ENCODE measurements at regions of chr2 and their contacts with region 1.

Region 1: DNA sequence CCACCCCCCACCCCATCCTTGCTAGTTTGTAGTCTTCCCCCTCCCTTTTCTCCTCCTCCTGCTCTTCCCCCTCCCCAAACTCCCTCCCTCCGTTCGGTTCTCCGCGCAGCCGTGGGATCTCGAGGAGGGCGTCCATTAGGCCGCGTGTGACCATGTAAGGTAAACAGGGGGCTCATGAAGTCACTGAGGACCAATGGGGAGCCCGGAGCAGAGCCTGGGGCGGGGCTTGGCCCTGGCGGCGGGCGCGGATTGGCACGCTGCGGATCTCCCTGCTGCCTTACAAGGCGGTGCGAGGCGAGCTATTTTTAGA is 246 bp upstream of the KLF7 start:
- DNase-seq: peak; percentile 99
- H3K4me3 Mint-ChIP-seq: peak overlapping the region; percentile 90
- H3K27ac Mint-ChIP-seq: peak overlapping the region; percentile 99
- H3K4me1 Mint-ChIP-seq: peaks cover 44% of the 10 kb centered on the region
- H3K27me3 Mint-ChIP-seq: no peaks in the 10 kb centered on the region
- CTCF ChIP-seq: no peak

Region 2: GRCh38 chr2:206790311-206790935 is 375.6 kb before region 1 on chr2:
- CTCF ChIA-PET with region 1: no interaction called
- POLR2A ChIA-PET with region 1: no interaction called
- intact Hi-C with region 1: no loop called
- DNase-seq: no peak
- H3K4me3 Mint-ChIP-seq: no peak overlapping the region
- H3K27ac Mint-ChIP-seq: peak overlapping the region; percentile 3
- H3K4me1 Mint-ChIP-seq: no peaks in the 10 kb centered on the region
- H3K27me3 Mint-ChIP-seq: no peaks in the 10 kb centered on the region
- CTCF ChIP-seq: no peak

Region 3: DNA sequence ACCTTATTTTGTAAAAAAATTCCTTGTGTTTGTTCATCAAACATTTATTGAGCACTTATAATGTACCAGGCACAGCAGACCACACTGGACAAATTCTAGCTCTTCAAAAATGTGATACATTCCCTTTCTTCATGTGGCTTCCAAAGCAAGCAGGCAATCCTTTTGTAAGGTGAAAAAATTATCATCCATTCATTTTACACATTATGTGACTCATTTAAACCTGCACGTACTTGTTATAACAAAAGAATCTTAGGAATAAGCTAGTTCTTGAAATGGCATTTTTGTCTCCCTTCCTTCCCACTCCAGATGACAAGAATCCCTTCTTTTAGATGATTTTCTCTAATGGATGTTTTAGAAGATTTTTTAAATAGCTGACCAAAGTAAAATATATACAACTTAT is 104.8 kb before region 1 on chr2:
- CTCF ChIA-PET with region 1: interaction called, 3 read pairs
- POLR2A ChIA-PET with region 1: interaction called, 12 read pairs
- intact Hi-C with region 1: no loop called
- DNase-seq: peak; percentile 28
- H3K4me3 Mint-ChIP-seq: no peak overlapping the region
- H3K27ac Mint-ChIP-seq: no peak overlapping the region
- H3K4me1 Mint-ChIP-seq: no peaks in the 10 kb centered on the region
- H3K27me3 Mint-ChIP-seq: no peaks in the 10 kb centered on the region
- CTCF ChIP-seq: no peak

Region 4: GRCh38 chr2:207143215-207144172 is 22.5 kb before region 1 on chr2:
- CTCF ChIA-PET with region 1: interaction called, 5 read pairs
- POLR2A ChIA-PET with region 1: interaction called, 143 read pairs
- intact Hi-C with region 1: no loop called
- DNase-seq: no peak
- H3K4me3 Mint-ChIP-seq: no peak overlapping the region
- H3K27ac Mint-ChIP-seq: peak overlapping the region; percentile 1
- H3K4me1 Mint-ChIP-seq: peaks cover 32% of the 10 kb centered on the region
- H3K27me3 Mint-ChIP-seq: no peaks in the 10 kb centered on the region
- CTCF ChIP-seq: no peak

Region 5: DNA sequence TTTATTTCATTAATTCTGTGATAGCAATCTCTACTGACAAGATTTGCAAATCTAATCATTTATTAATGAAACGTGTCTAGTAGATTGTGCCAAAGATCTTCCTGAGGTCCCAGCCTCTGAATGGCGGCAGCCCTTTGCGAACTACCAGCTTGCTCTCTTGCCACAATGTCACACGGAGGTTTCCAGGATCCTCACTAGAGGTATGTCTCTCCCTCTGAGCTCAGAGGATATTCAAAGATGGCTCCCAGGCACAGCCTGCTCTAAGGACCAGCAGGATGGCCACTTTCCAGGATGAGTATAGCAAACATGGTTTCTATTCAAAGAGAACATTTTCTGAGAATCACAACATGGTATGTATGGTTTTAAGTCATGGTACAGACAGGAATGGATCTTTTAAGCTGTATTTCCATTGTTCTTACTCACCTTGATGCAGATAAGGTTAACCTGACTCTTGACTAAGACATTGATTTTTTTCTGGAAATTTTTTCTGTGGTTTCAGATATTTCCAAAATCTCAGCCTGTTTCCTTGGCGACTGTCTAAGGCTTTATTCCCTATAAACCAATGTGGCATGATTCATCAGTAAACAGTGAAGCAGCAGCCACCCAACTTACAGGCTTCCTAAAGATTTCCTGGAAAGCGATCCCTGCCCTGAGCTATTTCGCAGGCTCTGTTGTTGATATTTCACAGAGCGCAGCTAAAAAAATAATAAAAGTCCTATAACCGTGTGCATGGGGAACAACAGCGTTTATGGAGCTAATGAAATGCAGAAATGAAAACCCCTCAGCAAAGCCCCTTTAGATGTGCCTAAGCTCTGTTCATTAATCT is 53.9 kb after region 1 on chr2:
- CTCF ChIA-PET with region 1: interaction called, 4 read pairs
- POLR2A ChIA-PET with region 1: interaction called, 10 read pairs
- intact Hi-C with region 1: no loop called
- DNase-seq: peak; percentile 68
- H3K4me3 Mint-ChIP-seq: no peak overlapping the region
- H3K27ac Mint-ChIP-seq: no peak overlapping the region
- H3K4me1 Mint-ChIP-seq: peaks cover 10% of the 10 kb centered on the region
- H3K27me3 Mint-ChIP-seq: no peaks in the 10 kb centered on the region
- CTCF ChIP-seq: no peak

Region 6: DNA sequence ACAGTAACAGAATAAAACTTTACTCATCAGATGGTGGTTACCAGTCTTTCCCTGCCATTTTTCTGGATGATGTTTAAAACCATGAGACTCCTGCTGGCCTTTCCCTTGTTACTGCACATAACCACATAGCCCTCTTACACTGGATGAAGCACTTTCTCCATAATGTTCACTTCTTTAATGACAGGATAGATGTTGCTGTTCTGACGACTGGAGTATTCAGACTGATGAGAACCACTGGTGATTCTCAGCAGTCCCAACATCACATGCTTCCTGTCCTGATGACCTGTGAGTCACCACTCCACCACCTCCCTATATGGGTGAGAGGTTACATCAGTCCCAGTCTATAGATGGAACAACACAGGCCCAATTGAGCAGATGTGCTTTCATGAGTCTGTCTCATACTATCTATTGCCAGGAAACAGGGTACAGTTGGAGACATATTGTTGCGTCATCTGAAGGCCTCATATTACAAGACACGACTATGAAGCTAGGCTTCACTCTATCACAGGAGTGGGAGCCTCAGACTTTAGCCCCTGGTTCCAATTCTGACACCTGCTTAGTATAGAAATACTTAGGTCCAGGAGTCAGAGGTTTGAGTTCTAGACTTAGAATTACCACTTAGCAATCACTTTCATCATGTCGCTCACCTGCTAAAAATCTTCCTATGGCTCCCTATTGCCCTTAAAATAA is 145.5 kb after region 1 on chr2:
- CTCF ChIA-PET with region 1: interaction called, 3 read pairs
- POLR2A ChIA-PET with region 1: interaction called, 3 read pairs
- intact Hi-C with region 1: loop called (anchors 1 kb)
- DNase-seq: peak; percentile 97
- H3K4me3 Mint-ChIP-seq: no peak overlapping the region
- H3K27ac Mint-ChIP-seq: peak overlapping the region; percentile 74
- H3K4me1 Mint-ChIP-seq: peaks cover 27% of the 10 kb centered on the region
- H3K27me3 Mint-ChIP-seq: no peaks in the 10 kb centered on the region
- CTCF ChIP-seq: peak; percentile 23

Region 7: GRCh38 chr2:207473049-207473930 is 307.3 kb after region 1 on chr2:
- CTCF ChIA-PET with region 1: interaction called, 21 read pairs
- POLR2A ChIA-PET with region 1: interaction called, 8 read pairs
- intact Hi-C with region 1: loop called (anchors 1 kb)
- DNase-seq: peak; percentile 77
- H3K4me3 Mint-ChIP-seq: no peak overlapping the region
- H3K27ac Mint-ChIP-seq: peak overlapping the region; percentile 39
- H3K4me1 Mint-ChIP-seq: peaks cover 8% of the 10 kb centered on the region
- H3K27me3 Mint-ChIP-seq: no peaks in the 10 kb centered on the region
- CTCF ChIP-seq: peak; percentile 71

Region 8: GRCh38 chr2:207676827-207677354 is 510.9 kb after region 1 on chr2:
- CTCF ChIA-PET with region 1: no interaction called
- POLR2A ChIA-PET with region 1: no interaction called
- intact Hi-C with region 1: no loop called
- DNase-seq: peak; percentile 62
- H3K4me3 Mint-ChIP-seq: no peak overlapping the region
- H3K27ac Mint-ChIP-seq: no peak overlapping the region
- H3K4me1 Mint-ChIP-seq: peaks cover 7% of the 10 kb centered on the region
- H3K27me3 Mint-ChIP-seq: no peaks in the 10 kb centered on the region
- CTCF ChIP-seq: no peak